PC-9 (cell line): ENCODE measurements at regions of chr4 and their contacts with region 1.

Region 1: GRCh38 chr4:76585897-76586360 is 150.9 kb downstream of the SHROOM3 start:
- DNase-seq: peak; percentile 83 to 86
- H3K4me3 ChIP-seq: peak overlapping the region; percentile 63
- H3K27ac ChIP-seq: peak overlapping the region; percentile 68
- H3K4me1 ChIP-seq: peaks cover 51% of the 10 kb centered on the region
- H3K27me3 ChIP-seq: no peaks in the 10 kb centered on the region
- CTCF ChIP-seq: no peak; the same call in 1 of the 2 replicates

Region 2: GRCh38 chr4:75752637-75753036 is 833.3 kb before region 1 on chr4:
- CTCF ChIA-PET with region 1: no interaction called
- POLR2A ChIA-PET with region 1: no interaction called
- intact Hi-C with region 1: no loop called
- DNase-seq: no peak
- H3K4me3 ChIP-seq: no peak overlapping the region
- H3K27ac ChIP-seq: no peak overlapping the region
- H3K4me1 ChIP-seq: no peaks in the 10 kb centered on the region
- H3K27me3 ChIP-seq: no peaks in the 10 kb centered on the region
- CTCF ChIP-seq: no peak

Region 3: GRCh38 chr4:76511947-76512346 is 74.0 kb before region 1 on chr4:
- CTCF ChIA-PET with region 1: no interaction called
- POLR2A ChIA-PET with region 1: interaction called, 3 read pairs
- intact Hi-C with region 1: loop called (anchors 2 kb)
- DNase-seq: no peak
- H3K4me3 ChIP-seq: no peak overlapping the region
- H3K27ac ChIP-seq: no peak overlapping the region
- H3K4me1 ChIP-seq: no peaks in the 10 kb centered on the region
- H3K27me3 ChIP-seq: no peaks in the 10 kb centered on the region
- CTCF ChIP-seq: no peak

Region 4: DNA sequence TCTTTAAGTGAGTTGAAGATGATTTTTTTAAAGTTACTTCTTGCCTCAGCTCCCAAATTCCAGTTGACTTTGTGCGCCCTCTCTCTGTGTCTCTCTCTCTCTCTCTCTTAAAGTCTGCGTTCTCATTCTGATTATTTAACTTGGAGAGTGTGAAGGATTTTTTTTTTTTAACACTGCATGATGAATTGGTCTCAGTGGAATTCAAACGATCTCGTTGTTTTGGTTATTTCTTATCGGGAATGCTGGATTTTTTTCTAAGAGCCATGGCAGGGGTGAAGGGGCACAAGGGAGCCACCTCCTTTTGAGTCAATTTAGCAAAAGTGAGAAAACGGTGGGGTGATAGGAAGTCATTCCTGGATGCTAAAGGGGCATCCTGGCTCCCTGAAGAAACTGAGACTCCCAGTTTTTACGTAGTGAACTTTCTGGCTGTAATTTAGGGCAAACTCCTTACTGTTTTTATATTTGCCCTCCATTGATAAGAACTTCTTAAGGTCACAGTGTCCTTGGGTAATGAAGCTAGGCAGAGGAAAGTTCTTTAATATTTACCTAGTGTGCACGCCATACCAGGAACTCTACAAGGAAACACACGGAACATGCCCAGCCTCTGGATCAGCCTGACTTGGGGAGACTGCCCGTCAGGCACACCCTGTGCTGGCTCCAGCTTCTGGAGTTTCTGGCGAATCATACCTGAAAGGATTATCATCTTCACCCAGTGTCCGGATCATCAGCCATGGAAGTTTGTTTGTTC is 25.4 kb after region 1 on chr4:
- CTCF ChIA-PET with region 1: no interaction called
- POLR2A ChIA-PET with region 1: no interaction called
- intact Hi-C with region 1: loop called (anchors 2 kb)
- DNase-seq: no peak
- H3K4me3 ChIP-seq: no peak overlapping the region
- H3K27ac ChIP-seq: no peak overlapping the region
- H3K4me1 ChIP-seq: no peaks in the 10 kb centered on the region
- H3K27me3 ChIP-seq: no peaks in the 10 kb centered on the region
- CTCF ChIP-seq: no peak

Region 5: DNA sequence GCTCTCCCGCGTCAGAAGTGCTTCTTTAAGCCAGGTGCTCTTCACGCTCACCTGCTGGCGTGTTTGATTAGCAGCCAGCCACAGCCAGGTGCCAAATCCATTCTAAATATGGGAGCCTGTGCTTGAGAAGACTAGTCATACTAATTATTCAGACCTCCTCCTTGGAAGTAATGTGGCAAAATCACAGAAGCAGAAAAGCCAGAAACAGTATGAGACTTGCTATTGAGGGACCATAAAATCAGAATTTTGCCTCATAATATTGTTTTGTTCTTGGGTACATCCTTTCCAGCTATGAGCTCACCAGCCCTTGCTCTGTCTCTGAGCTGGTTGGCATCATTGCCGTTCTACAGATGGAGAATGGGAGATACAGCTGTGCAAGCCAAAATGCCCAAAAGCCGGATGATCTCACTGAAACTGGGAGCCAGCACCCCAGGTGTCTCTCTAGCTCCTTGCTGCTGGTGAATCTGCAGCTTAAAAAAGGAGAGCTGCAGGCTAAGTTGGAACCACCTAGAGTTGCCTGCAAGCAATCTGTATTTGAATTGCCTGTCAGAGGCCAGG is 54.5 kb after region 1 on chr4:
- CTCF ChIA-PET with region 1: no interaction called
- POLR2A ChIA-PET with region 1: no interaction called
- intact Hi-C with region 1: loop called (anchors 1 kb)
- DNase-seq: peak in 1 of 2 experiments; percentile 41
- H3K4me3 ChIP-seq: no peak overlapping the region; the same call in 1 of the 2 replicates
- H3K27ac ChIP-seq: no peak overlapping the region
- H3K4me1 ChIP-seq: peaks cover 61% of the 10 kb centered on the region
- H3K27me3 ChIP-seq: no peaks in the 10 kb centered on the region
- CTCF ChIP-seq: no peak

Region 6: DNA sequence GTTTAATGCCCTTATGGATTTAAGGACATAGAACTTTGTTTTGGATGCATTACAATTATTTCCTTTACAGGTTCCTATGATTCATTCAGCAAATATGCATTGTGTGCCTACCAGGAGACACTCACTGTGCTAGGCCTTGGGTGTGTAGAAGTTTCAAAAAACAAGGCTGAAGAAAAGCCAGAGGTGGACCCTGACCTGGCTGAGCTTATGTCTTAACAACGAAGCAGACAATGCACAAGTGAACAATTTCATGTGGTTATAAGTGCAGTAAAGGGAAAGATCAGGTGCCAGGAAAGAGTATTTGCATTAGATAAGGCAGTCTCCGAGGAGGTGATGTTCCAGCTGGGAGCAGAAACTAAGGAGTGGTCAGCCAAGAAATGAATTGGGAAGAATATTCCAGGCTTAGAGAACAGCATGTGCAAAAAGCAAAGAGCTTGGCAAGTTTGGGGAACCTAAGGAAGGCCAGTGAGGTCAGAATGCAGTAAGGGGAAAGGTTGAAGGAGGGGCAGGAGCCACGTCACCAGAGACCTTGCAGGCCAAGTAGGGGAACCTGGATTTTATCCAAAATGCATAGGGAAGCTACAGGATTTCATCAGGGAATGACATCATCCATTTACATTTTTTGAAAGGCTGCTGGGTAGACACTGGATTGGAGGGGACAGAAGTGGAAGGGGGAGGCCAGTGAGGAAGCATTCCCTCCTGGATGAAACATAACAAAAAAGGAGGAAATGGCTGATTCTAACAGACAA is 118.4 kb after region 1 on chr4:
- CTCF ChIA-PET with region 1: no interaction called
- POLR2A ChIA-PET with region 1: no interaction called
- intact Hi-C with region 1: loop called (anchors 1 kb)
- DNase-seq: peak; percentile 51 to 87
- H3K4me3 ChIP-seq: peak overlapping the region; percentile 35; the same call in 1 of the 2 replicates
- H3K27ac ChIP-seq: peak overlapping the region; percentile 95
- H3K4me1 ChIP-seq: peaks cover 66% of the 10 kb centered on the region
- H3K27me3 ChIP-seq: no peaks in the 10 kb centered on the region
- CTCF ChIP-seq: no peak